AG04450 (cell line): ENCODE measurements at regions of chr7 and their contacts with region 1.

Region 1: GRCh38 chr7:122528879-122529481 is 169.9 kb downstream of the RNF133 start:
- DNase-seq: no peak
- H3K4me3 ChIP-seq: no peak overlapping the region
- H3K27ac ChIP-seq: no peak overlapping the region
- H3K27me3 ChIP-seq: no peaks in the 10 kb centered on the region
- CTCF ChIP-seq: peak; percentile 57

Region 2: DNA sequence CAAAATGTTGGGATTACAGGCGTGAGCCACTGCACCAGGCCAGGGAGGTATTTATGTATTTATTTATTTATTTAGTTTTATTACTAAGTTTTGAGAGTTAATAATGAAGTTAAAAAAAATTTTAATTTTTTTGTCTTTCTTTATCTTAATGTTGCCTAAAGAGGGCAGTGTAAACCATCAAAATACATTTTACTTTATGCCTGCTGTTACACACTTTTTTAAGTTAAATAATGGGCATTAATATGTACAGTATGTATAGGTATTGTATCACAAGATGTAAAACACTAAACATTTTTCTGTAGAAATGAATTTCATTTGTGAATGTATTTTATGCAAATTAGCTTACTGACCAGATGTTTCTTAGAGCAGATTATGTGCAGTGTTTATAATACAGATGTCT is 514.3 kb before region 1 on chr7:
- CTCF ChIA-PET with region 1: interaction called, 18 read pairs
- POLR2A ChIA-PET with region 1: no interaction called
- DNase-seq: no peak
- H3K4me3 ChIP-seq: no peak overlapping the region
- H3K27ac ChIP-seq: no peak overlapping the region
- H3K27me3 ChIP-seq: no peaks in the 10 kb centered on the region
- CTCF ChIP-seq: 0 out of 2 replicates have a peak, but pooled peaks have one; percentile 19

Region 3: GRCh38 chr7:122219253-122219865 is 309.6 kb before region 1 on chr7:
- CTCF ChIA-PET with region 1: interaction called, 15 read pairs
- POLR2A ChIA-PET with region 1: no interaction called
- DNase-seq: no peak
- H3K4me3 ChIP-seq: no peak overlapping the region
- H3K27ac ChIP-seq: no peak overlapping the region
- H3K27me3 ChIP-seq: no peaks in the 10 kb centered on the region
- CTCF ChIP-seq: peak; percentile 69

Region 4: DNA sequence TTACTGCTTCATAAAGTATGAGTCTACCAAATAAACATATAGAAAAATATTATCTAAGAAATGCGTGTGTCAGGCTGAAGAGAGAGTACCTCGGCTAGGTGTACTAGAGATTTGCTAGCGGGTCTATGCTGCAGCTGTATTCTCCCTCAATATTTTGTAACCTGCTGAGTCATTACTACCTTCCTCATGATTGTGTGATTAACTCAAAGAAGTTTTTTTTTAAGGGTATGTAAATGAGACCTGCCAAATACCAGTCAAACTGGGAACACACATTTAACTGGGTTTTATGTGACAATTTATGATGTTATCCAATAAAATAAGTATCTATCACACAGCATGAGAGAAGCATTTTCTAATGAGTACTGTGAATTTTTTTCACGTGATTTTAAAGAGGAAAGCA is 10.5 kb before region 1 on chr7:
- CTCF ChIA-PET with region 1: interaction called, 10 read pairs
- POLR2A ChIA-PET with region 1: no interaction called
- DNase-seq: no peak
- H3K4me3 ChIP-seq: no peak overlapping the region
- H3K27ac ChIP-seq: no peak overlapping the region
- H3K27me3 ChIP-seq: no peaks in the 10 kb centered on the region
- CTCF ChIP-seq: no peak